GM23248 (cell line): ENCODE measurements at regions of chr2 and their contacts with region 1.

Region 1: GRCh38 chr2:28958689-28959088 is 22.4 kb upstream of the TOGARAM2 start:
- DNase-seq: peak; percentile 90
- H3K4me3 ChIP-seq: peak overlapping the region; percentile 38; the same call in 1 of the 2 replicates
- H3K27ac ChIP-seq: no peak overlapping the region
- H3K4me1 ChIP-seq: no peaks in the 10 kb centered on the region; the same call in 1 of the 2 replicates
- H3K27me3 ChIP-seq: no peaks in the 10 kb centered on the region

Region 2: GRCh38 chr2:29201979-29202378 is 243.3 kb after region 1 on chr2:
- in situ Hi-C with region 1: loop called (anchors 5 kb)
- DNase-seq: no peak
- H3K4me3 ChIP-seq: no peak overlapping the region
- H3K27ac ChIP-seq: no peak overlapping the region
- H3K4me1 ChIP-seq: no peaks in the 10 kb centered on the region
- H3K27me3 ChIP-seq: no peaks in the 10 kb centered on the region

Region 3: DNA sequence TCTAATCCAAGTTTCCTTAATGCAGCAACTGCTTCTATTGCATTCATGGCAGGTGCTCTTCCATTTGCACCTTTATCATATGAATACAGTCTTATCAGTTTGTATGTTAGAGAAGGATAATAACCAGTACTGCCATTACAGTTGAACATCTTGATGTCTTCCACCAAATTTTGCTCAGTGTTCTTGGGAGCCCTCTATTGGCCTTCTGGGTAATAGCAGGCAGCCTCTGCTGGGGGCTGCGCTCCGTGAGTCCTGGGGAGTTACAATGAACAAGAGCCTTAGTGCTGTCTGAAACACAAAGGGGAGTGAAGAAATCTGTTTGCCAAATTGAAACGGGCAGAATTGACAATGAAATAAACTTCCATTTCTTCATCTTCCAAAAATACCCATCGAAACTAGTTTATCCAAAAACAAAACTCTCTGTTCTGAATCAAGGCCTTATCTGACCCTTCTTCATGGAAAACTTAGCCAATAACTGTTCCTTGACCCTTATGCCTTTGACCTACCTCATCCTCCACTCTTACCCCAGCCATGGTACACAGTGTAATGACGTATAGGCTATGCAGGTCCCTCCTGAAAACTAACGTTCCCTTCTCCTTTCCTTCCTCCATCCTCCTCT is 882.8 kb after region 1 on chr2:
- in situ Hi-C with region 1: loop called (anchors 25 kb)
- DNase-seq: peak; percentile 57
- H3K4me3 ChIP-seq: no peak overlapping the region
- H3K27ac ChIP-seq: no peak overlapping the region
- H3K4me1 ChIP-seq: peaks cover 9% of the 10 kb centered on the region
- H3K27me3 ChIP-seq: 0 out of 2 replicates have a peak, but pooled peaks cover 16% of the 10 kb centered on the region

Region 4: DNA sequence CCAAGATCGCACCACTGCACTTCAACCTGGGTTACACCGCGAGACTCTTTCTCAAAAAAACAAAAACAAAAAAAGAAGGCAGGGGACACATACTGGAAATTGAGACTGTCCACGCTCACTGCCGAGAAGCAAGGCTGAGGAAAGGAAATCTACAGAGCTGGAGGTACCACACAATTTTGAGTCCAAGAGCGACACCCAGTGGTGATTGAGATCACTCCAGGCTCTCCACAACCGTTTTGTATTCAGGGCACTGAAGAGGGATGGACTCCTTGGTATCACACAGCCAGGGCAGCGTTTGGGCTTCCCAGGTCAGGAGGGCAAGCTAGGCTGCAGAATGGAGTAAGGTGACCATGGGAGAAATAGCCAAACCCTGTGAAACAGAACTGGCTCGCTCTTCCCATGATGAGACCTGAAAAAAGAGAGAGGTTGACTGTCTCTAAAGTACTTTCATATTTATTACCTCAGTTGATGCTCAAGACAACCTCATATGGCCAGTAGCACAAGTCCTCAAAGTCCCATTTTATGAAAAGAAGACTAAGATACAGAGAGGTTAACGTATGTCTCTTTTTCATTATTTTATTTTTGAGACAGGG is 1113.7 kb after region 1 on chr2:
- in situ Hi-C with region 1: loop called (anchors 25 kb)
- DNase-seq: peak; percentile 84
- H3K4me3 ChIP-seq: no peak overlapping the region
- H3K27ac ChIP-seq: no peak overlapping the region
- H3K4me1 ChIP-seq: no peaks in the 10 kb centered on the region
- H3K27me3 ChIP-seq: peaks cover 43% of the 10 kb centered on the region